ENCODE measurements at regions of chr6 and their contacts with region 1.

Region 1: GRCh38 chr6:127971945-127972391 is 71.1 kb upstream of the THEMIS start:
- DNase-seq: peak; percentile 67
- H3K4me3 Mint-ChIP-seq: peak overlapping the region; percentile 66
- H3K27ac Mint-ChIP-seq: peak overlapping the region; percentile 97
- H3K4me1 Mint-ChIP-seq: peaks cover 69% of the 10 kb centered on the region
- H3K27me3 Mint-ChIP-seq: no peaks in the 10 kb centered on the region

Region 2: GRCh38 chr6:127900935-127901334 is 71.0 kb before region 1 on chr6 and contains the start of gene THEMIS:
- CTCF ChIA-PET with region 1: interaction called, 18 read pairs
- DNase-seq: peak; percentile 74
- H3K4me3 Mint-ChIP-seq: peak within 1 kb of the TSS; percentile 95
- H3K27ac Mint-ChIP-seq: peak within 1 kb of the TSS; percentile 95
- H3K4me1 Mint-ChIP-seq: peaks cover 61% of the 10 kb centered on the region
- H3K27me3 Mint-ChIP-seq: no peaks in the 10 kb centered on the region

Measured in activated naive CD4-positive, alpha-beta T cell treated with anti-CD3 and anti-CD28 coated beads, Interleukin-2, amount 10 ng/mL, durations not matched to agents 7 days and 5 days (primary cell).